ENCODE measurements at regions of chr12 and their contacts with region 1.

Region 1: GRCh38 chr12:94074980-94075928 is 73.1 kb upstream of the PLXNC1 start:
- DNase-seq: peak; percentile 17
- CTCF ChIP-seq: peak; percentile 37

Region 2: GRCh38 chr12:92784795-92785562 is 1290.3 kb before region 1 on chr12:
- in situ Hi-C with region 1: loop called (anchors 25 kb)
- DNase-seq: peak; percentile 57
- CTCF ChIP-seq: peak; percentile 55

Region 3: GRCh38 chr12:93766796-93767523 is 308.3 kb before region 1 on chr12:
- in situ Hi-C with region 1: loop called (anchors 25 kb)
- DNase-seq: peak; percentile 59
- CTCF ChIP-seq: peak; percentile 67

Region 4: DNA sequence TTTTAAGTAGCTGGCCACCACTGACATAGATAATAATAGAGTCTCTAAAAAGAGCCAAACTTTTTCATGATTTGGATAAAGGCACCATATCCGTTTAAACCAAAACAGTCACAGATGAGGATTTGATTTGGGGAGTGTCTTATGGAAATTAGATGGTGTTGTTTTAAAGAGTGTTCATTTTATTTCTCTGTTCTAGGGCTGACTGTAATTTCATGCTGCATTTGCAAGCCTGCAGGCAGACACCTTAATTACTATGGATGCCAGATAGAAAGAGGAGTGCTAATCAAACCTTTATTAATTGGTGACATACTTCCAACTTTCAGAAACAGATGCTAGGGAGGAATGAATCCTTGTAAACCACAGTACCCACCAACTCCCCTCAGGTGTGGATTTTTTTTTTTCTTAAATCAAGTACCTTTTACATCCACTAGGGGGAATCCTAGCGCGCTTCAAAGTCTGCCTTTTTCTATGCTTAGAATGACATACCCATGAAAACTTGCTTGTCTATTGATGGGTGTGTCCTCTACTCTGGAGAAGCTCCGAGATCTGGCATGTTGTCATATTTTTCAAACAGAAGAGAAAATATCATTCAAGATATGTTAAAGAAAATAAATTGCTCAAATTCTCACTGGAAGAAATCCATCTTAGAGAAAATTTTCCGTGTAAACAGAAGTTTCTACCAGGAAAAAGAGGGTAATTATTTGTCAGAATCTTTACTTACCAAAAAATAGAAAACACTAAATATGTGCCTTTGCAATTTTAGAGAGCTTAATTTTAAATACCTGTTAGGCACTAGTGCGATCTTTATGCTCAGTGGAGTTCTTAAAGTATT is 58.9 kb after region 1 on chr12:
- in situ Hi-C with region 1: no loop called
- DNase-seq: peak; percentile 71
- CTCF ChIP-seq: peak; percentile 57

Measured in GM13977 (cell line).